ENCODE measurements at regions of chr5 and their contacts with region 1.

Region 1: DNA sequence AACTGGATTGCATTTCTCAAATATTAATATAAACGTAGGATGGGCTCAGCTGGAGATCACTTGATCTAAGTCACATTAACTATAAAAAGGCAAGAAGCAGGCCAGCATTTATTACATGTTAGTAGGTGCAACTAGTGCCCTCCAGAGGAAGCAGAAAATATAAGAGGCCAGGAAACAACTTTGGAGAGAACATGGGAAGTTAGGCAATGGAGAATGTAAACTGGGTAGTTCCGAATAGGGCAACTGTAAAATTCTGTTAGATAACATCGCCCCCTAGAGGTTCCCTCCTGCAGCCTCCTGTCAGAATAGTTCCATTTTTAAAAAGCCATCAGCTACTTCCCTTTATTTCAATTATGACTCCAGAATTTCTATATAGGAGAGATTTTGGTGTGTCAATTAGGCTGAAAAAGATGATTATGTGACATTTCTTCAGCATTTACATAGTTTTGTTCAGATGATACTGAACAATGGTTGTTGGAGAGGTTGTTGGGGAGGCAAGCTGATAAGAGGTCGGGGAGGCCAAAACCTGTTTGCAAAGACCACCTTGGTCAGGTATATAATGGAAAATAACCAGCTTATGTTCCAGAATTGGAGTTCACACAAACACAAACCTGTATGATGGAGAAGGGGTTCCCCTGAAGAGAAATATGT is 22.4 kb downstream of the CCL28 start:
- DNase-seq: peak; percentile 73
- ATAC-seq: peak; percentile 61
- H3K4me3 ChIP-seq: no peak overlapping the region
- H3K4me3 Mint-ChIP-seq: no peak overlapping the region
- H3K27ac ChIP-seq: no peak overlapping the region
- H3K27ac Mint-ChIP-seq: no peak overlapping the region
- H3K4me1 ChIP-seq: no peaks in the 10 kb centered on the region
- H3K4me1 Mint-ChIP-seq: peaks cover 17% of the 10 kb centered on the region
- H3K27me3 ChIP-seq: no peaks in the 10 kb centered on the region
- H3K27me3 Mint-ChIP-seq: no peaks in the 10 kb centered on the region
- CTCF ChIP-seq: peak; percentile 91

Region 2: GRCh38 chr5:43227655-43228054 is 162.1 kb before region 1 on chr5:
- CTCF ChIA-PET with region 1: interaction called, 6 read pairs
- POLR2A ChIA-PET with region 1: no interaction called
- intact Hi-C with region 1: loop called (anchors 5 kb)
- DNase-seq: no peak
- ATAC-seq: no peak
- H3K4me3 ChIP-seq: no peak overlapping the region
- H3K4me3 Mint-ChIP-seq: no peak overlapping the region
- H3K27ac ChIP-seq: no peak overlapping the region
- H3K27ac Mint-ChIP-seq: no peak overlapping the region
- H3K4me1 ChIP-seq: no peaks in the 10 kb centered on the region
- H3K4me1 Mint-ChIP-seq: no peaks in the 10 kb centered on the region
- H3K27me3 ChIP-seq: no peaks in the 10 kb centered on the region
- H3K27me3 Mint-ChIP-seq: no peaks in the 10 kb centered on the region
- CTCF ChIP-seq: peak; percentile 16

Region 3: DNA sequence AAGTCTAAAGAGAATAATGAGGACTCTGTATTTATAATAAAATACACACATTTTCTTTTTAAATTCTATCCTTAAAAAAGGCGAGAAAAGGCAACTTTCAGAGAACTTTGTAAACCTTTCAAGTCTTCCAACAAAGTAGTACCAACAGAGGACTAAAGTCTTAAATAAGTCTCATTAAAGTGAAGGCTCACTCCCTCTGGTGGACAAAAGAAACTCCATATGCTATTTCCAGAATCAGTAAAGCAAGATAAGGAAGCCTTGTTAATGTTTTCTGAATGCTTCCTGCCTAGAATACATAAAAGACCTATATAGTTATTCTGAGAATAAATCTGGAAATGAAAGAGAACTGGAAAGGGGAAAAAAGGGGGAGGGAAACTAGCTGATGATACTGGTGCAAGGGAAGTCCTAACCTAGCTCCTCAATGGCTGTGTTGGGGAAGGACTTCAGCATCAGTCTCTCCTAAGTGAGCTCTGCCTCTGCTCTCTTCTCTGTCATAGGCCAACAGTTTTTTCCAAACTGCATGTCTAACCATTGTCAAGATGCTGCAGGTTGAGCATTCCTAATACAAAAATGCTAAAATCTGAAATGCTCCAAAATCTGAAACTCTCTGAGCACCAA is 83.7 kb before region 1 on chr5:
- CTCF ChIA-PET with region 1: interaction called, 25 read pairs
- POLR2A ChIA-PET with region 1: no interaction called
- intact Hi-C with region 1: no loop called
- DNase-seq: peak; percentile 61
- ATAC-seq: peak; percentile 49
- H3K4me3 ChIP-seq: no peak overlapping the region
- H3K4me3 Mint-ChIP-seq: no peak overlapping the region
- H3K27ac ChIP-seq: peak overlapping the region in 1 of 2 donors; percentile 48
- H3K27ac Mint-ChIP-seq: no peak overlapping the region
- H3K4me1 ChIP-seq: peaks cover 0 to 30% of the 10 kb centered on the region in 2 donors
- H3K4me1 Mint-ChIP-seq: peaks cover 50% of the 10 kb centered on the region
- H3K27me3 ChIP-seq: no peaks in the 10 kb centered on the region
- H3K27me3 Mint-ChIP-seq: no peaks in the 10 kb centered on the region
- CTCF ChIP-seq: peak; percentile 77

Region 4: DNA sequence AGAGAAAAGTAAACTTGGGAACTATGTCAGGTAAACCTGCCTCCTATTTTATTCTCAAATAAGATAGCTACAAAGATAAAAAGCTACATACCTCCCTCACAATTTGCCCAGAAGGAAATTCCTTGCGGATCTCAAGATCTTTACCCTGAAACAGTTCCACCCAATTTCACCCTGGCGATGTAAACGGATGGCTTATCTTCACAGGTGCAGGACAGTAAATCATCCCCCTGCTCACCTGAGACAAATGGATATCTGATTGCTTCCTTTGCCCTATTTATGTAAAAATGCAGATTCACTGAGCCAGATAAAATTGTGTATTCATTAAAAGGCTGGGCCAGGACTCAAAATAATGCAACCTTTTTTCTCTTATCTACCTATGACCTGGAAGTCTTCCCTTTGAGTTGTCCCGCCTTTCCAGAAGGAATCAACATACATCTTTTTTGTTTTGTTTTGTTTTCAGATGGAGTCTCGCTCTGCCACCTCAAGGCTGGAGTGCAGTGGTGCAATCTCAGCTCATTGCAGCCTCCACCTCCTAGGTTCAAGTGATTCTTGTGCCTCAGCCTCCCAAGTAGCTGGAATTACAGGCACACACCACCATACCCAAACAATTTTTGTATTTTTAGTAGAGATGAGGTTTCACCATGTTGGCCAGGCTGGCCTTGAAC is 80.0 kb after region 1 on chr5:
- CTCF ChIA-PET with region 1: no interaction called
- POLR2A ChIA-PET with region 1: no interaction called
- intact Hi-C with region 1: no loop called
- DNase-seq: no peak
- ATAC-seq: no peak
- H3K4me3 ChIP-seq: no peak overlapping the region
- H3K4me3 Mint-ChIP-seq: no peak overlapping the region
- H3K27ac ChIP-seq: no peak overlapping the region
- H3K27ac Mint-ChIP-seq: no peak overlapping the region
- H3K4me1 ChIP-seq: no peaks in the 10 kb centered on the region
- H3K4me1 Mint-ChIP-seq: peaks cover 19% of the 10 kb centered on the region
- H3K27me3 ChIP-seq: no peaks in the 10 kb centered on the region
- H3K27me3 Mint-ChIP-seq: no peaks in the 10 kb centered on the region
- CTCF ChIP-seq: no peak